Activated T-helper 1 cell treated with anti-CD3 and anti-CD28 coated beads, Interleukin-12 subunit alpha, Interleukin-12 subunit beta, Interleukin-2, Interleukin-4 antibody, amounts not matched to agents 30 ng/mL and 10 ng/mL and 1 ng/mL, durations not matched to agents 14 hours and 24 hours and 36 hours (primary cell): ENCODE measurements at regions of chr5 and their contacts with region 1.

Region 1: GRCh38 chr5:109863752-109864151 is 174.0 kb downstream of the MAN2A1 start:
- DNase-seq: no peak
- H3K4me3 Mint-ChIP-seq: no peak overlapping the region
- H3K27ac Mint-ChIP-seq: peak overlapping the region; percentile 38
- H3K4me1 Mint-ChIP-seq: peaks cover 50% of the 10 kb centered on the region
- H3K27me3 Mint-ChIP-seq: no peaks in the 10 kb centered on the region

Region 2: GRCh38 chr5:109365653-109366052 is 498.1 kb before region 1 on chr5:
- intact Hi-C with region 1: no loop called
- DNase-seq: no peak
- H3K4me3 Mint-ChIP-seq: no peak overlapping the region
- H3K27ac Mint-ChIP-seq: no peak overlapping the region
- H3K4me1 Mint-ChIP-seq: peaks cover 10% of the 10 kb centered on the region
- H3K27me3 Mint-ChIP-seq: no peaks in the 10 kb centered on the region

Region 3: GRCh38 chr5:109788596-109788995 is 75.2 kb before region 1 on chr5:
- intact Hi-C with region 1: loop called (anchors 5 kb)
- DNase-seq: no peak
- H3K4me3 Mint-ChIP-seq: no peak overlapping the region
- H3K27ac Mint-ChIP-seq: no peak overlapping the region
- H3K4me1 Mint-ChIP-seq: peaks cover 26% of the 10 kb centered on the region
- H3K27me3 Mint-ChIP-seq: no peaks in the 10 kb centered on the region

Region 4: DNA sequence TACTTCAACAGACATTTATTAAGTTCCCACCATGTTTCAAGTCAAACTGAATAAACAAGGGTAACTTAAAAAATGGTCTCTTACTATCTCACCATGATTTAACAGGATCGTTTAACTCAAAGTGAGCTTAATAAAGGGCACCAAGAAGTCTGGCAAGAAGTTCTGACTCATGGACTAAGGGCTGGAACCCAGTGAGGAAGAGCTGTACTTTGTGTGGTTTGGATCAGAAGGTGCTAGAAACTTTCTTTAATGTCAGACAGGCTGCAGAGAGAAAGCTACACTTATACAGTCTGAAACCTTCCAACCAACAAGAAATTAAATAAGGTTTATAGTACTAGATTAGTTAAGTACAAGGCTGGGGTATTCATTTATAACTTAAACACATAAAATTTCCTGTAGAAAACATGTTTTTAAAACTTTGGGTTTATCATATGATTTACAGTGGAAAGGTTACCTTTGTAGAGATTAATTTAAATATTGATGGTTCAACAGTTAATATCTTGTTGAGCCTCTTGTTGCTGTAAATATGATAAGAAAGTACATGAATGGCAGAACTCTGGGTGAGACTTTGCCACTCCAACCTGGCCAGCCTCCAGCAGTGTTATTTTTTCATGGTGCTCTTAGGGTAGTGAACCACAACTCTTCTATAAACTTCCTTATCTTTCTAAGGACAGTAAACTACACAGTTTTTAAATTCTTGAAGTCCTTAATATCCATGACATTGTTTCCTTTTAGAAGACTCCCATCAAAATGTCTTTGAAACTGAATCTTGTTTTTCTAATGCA is 11.2 kb before region 1 on chr5:
- intact Hi-C with region 1: loop called (anchors 2 kb)
- DNase-seq: no peak
- H3K4me3 Mint-ChIP-seq: no peak overlapping the region
- H3K27ac Mint-ChIP-seq: no peak overlapping the region
- H3K4me1 Mint-ChIP-seq: peaks cover 56% of the 10 kb centered on the region
- H3K27me3 Mint-ChIP-seq: no peaks in the 10 kb centered on the region

Region 5: GRCh38 chr5:109965634-109966033 is 101.9 kb after region 1 on chr5:
- intact Hi-C with region 1: loop called (anchors 5 kb)
- DNase-seq: no peak
- H3K4me3 Mint-ChIP-seq: no peak overlapping the region
- H3K27ac Mint-ChIP-seq: peak overlapping the region; percentile 53
- H3K4me1 Mint-ChIP-seq: peaks cover 21% of the 10 kb centered on the region
- H3K27me3 Mint-ChIP-seq: peaks cover 2% of the 10 kb centered on the region